Naive thymus-derived CD4-positive, alpha-beta T cell (primary cell): ENCODE measurements at regions of chr1 and their contacts with region 1.

Region 1: GRCh38 chr1:84944767-84945486 is 51.9 kb upstream of the LPAR3 start:
- DNase-seq: peak; percentile 20 to 94 (median 90)
- ATAC-seq: peak; percentile 98
- H3K4me3 ChIP-seq: peak overlapping the region; percentile 63
- H3K4me3 Mint-ChIP-seq: peak overlapping the region; percentile 72 to 93 (median 86)
- H3K27ac ChIP-seq: peak overlapping the region; percentile 89
- H3K27ac Mint-ChIP-seq: peak overlapping the region; percentile 87 to 98 (median 96)
- H3K4me1 ChIP-seq: peaks cover 5 to 9% of the 10 kb centered on the region in 2 donors
- H3K4me1 Mint-ChIP-seq: peaks cover 7 to 25% (median 12%) of the 10 kb centered on the region in 7 donors
- H3K27me3 ChIP-seq: no peaks in the 10 kb centered on the region
- H3K27me3 Mint-ChIP-seq: peaks cover 0 to 5% (median 0%) of the 10 kb centered on the region in 5 donors

Region 2: DNA sequence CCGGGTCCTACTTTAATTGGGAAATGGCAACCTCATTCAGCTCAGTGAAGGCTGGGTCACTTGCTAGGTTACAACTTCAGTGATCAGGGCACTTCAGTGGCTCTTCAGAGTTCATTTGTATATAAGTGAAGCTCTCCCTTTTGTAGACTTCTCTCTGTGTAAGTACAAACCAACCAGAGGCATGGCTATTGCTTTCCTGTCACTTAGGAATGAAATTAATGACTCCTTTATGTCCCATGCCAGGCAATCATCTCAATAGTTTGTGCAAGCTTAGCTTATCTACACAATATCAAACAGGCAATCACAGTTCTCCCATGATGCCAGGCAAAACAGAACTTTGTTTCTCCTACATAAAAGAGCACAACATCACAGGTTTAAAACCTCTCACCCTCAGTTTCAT is 347.9 kb before region 1 on chr1:
- CTCF ChIA-PET with region 1: no interaction called
- POLR2A ChIA-PET with region 1: no interaction called
- intact Hi-C with region 1: no loop called
- DNase-seq: no peak
- ATAC-seq: no peak
- H3K4me3 ChIP-seq: no peak overlapping the region
- H3K4me3 Mint-ChIP-seq: no peak overlapping the region
- H3K27ac ChIP-seq: no peak overlapping the region
- H3K27ac Mint-ChIP-seq: no peak overlapping the region
- H3K4me1 ChIP-seq: no peaks in the 10 kb centered on the region
- H3K4me1 Mint-ChIP-seq: peaks cover 0 to 11% (median 1%) of the 10 kb centered on the region in 7 donors
- H3K27me3 ChIP-seq: no peaks in the 10 kb centered on the region
- H3K27me3 Mint-ChIP-seq: peaks cover 0 to 7% (median 0%) of the 10 kb centered on the region in 5 donors

Region 3: GRCh38 chr1:84973498-84974334 is 28.8 kb after region 1 on chr1:
- CTCF ChIA-PET with region 1: interaction called, 3 read pairs
- POLR2A ChIA-PET with region 1: no interaction called
- intact Hi-C with region 1: loop called in 1 of 2 experiments (anchors 1 kb)
- DNase-seq: peak in 1 of 9 donors; percentile 49
- ATAC-seq: no peak
- H3K4me3 ChIP-seq: no peak overlapping the region
- H3K4me3 Mint-ChIP-seq: no peak overlapping the region
- H3K27ac ChIP-seq: no peak overlapping the region
- H3K27ac Mint-ChIP-seq: peak overlapping the region in 1 of 9 donors; percentile 72
- H3K4me1 ChIP-seq: peaks cover 0 to 23% of the 10 kb centered on the region in 2 donors
- H3K4me1 Mint-ChIP-seq: peaks cover 0 to 69% (median 0%) of the 10 kb centered on the region in 7 donors
- H3K27me3 ChIP-seq: no peaks in the 10 kb centered on the region
- H3K27me3 Mint-ChIP-seq: peaks cover 0 to 21% (median 0%) of the 10 kb centered on the region in 5 donors

Region 4: DNA sequence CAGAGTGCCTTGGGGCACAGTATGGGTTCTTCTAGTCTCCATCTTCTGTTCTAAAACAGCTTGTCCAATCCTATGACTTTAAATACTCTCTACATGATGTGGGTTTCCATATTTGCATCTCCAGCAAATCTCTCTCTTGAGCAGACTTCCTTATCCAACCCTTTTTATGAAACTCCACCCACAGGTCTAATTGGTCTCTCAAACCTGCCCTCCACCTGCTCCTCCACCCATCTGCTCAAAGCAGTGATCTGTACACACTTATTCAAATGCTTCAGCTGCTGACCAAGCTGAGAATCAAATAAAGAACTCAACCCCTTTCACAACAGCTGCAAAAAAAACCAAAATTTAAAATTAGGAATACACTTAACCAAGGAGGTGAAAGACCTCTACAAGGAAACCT is 40.4 kb after region 1 on chr1:
- CTCF ChIA-PET with region 1: no interaction called
- POLR2A ChIA-PET with region 1: no interaction called
- intact Hi-C with region 1: no loop called
- DNase-seq: no peak
- ATAC-seq: no peak
- H3K4me3 ChIP-seq: no peak overlapping the region
- H3K4me3 Mint-ChIP-seq: no peak overlapping the region
- H3K27ac ChIP-seq: no peak overlapping the region
- H3K27ac Mint-ChIP-seq: no peak overlapping the region
- H3K4me1 ChIP-seq: peaks cover 2 to 17% of the 10 kb centered on the region in 2 donors
- H3K4me1 Mint-ChIP-seq: peaks cover 6 to 29% (median 9%) of the 10 kb centered on the region in 7 donors
- H3K27me3 ChIP-seq: no peaks in the 10 kb centered on the region
- H3K27me3 Mint-ChIP-seq: peaks cover 0 to 13% (median 0%) of the 10 kb centered on the region in 5 donors

Region 5: DNA sequence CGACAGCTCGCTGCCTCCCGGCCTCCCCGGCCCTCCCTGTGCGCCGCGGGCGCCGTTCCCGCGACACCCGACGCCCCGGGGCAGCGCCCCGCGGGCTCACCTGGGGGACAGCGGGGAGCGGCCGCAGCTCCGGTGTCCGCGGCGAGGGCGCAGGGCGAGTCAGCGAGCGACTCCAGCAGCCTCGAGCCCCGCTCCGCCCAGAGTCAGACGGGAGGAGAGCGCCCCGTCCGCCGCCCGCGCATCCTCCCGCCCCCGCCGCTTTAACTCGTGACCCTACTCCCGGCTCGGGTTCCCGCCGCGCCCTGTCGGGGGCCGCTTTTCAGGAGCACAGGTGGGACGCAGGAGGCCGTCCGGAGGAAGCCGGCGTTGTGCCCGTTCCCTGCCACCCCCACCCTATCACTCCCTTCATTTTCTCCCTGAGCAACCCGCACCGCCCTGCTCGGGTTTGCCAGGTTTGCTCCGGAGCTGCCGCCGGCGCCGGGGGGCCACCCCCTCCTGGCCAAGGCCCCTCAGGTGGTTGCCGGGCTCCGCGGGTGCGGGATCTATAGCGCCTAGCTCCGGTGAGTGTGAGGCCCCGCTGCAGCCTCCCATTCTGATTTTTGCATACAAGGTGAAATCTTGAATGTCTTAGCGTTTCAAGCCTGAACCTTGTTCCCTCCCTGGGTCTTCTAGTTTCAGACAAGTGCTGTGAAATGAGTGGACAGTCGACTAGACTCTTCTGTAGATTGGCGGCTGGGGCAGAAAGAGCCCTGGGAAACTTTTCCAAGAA is 103.6 kb after region 1 on chr1 and contains the start of gene MCOLN3:
- CTCF ChIA-PET with region 1: interaction called, 3 read pairs
- POLR2A ChIA-PET with region 1: no interaction called
- intact Hi-C with region 1: loop called in 1 of 2 experiments (anchors 1 kb)
- DNase-seq: peak in 7 of 9 donors; percentile 9 to 56 (median 24)
- ATAC-seq: peak; percentile 67
- H3K4me3 ChIP-seq: peak within 1 kb of the TSS; percentile 38
- H3K4me3 Mint-ChIP-seq: peak within 1 kb of the TSS; percentile 70 to 86 (median 80)
- H3K27ac ChIP-seq: no peak within 1 kb of the TSS
- H3K27ac Mint-ChIP-seq: peak within 1 kb of the TSS in 1 of 9 donors; percentile 55
- H3K4me1 ChIP-seq: peaks cover 10 to 21% of the 10 kb centered on the region in 2 donors
- H3K4me1 Mint-ChIP-seq: peaks cover 7 to 35% (median 29%) of the 10 kb centered on the region in 7 donors
- H3K27me3 ChIP-seq: peaks cover 11 to 13% of the 10 kb centered on the region in 2 donors
- H3K27me3 Mint-ChIP-seq: peaks cover 47 to 60% (median 54%) of the 10 kb centered on the region in 5 donors
- total RNA-seq, gene MCOLN3: 0.77 to 11.1 (median 0.95) TPM

Region 6: DNA sequence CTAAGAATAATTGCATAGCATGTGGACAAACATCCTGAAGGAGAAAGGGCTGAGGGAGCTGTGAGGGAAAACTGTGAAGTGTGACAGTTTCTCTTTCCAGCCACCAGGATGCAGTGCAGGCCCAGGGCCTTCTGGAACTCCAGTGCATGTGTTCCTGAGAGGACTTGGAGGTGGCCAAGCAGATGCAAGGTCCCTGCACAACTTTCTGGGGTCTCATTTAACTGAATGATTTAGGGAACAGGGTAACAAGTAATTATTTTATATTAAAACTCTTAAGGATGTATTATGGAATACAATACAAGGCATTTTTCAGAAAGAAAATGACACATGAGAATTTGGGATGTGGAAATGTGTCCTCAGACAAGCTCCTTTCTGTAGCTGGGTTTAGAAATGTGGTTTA is 164.5 kb after region 1 on chr1:
- CTCF ChIA-PET with region 1: interaction called, 5 read pairs
- POLR2A ChIA-PET with region 1: no interaction called
- intact Hi-C with region 1: loop called (anchors 1 kb)
- DNase-seq: peak in 7 of 9 donors; percentile 27 to 57 (median 43)
- ATAC-seq: peak; percentile 69
- H3K4me3 ChIP-seq: no peak overlapping the region
- H3K4me3 Mint-ChIP-seq: no peak overlapping the region
- H3K27ac ChIP-seq: no peak overlapping the region
- H3K27ac Mint-ChIP-seq: peak overlapping the region in 1 of 9 donors; percentile 41
- H3K4me1 ChIP-seq: no peaks in the 10 kb centered on the region
- H3K4me1 Mint-ChIP-seq: no peaks in the 10 kb centered on the region
- H3K27me3 ChIP-seq: no peaks in the 10 kb centered on the region
- H3K27me3 Mint-ChIP-seq: peaks cover 0 to 31% (median 0%) of the 10 kb centered on the region in 5 donors

Region 7: DNA sequence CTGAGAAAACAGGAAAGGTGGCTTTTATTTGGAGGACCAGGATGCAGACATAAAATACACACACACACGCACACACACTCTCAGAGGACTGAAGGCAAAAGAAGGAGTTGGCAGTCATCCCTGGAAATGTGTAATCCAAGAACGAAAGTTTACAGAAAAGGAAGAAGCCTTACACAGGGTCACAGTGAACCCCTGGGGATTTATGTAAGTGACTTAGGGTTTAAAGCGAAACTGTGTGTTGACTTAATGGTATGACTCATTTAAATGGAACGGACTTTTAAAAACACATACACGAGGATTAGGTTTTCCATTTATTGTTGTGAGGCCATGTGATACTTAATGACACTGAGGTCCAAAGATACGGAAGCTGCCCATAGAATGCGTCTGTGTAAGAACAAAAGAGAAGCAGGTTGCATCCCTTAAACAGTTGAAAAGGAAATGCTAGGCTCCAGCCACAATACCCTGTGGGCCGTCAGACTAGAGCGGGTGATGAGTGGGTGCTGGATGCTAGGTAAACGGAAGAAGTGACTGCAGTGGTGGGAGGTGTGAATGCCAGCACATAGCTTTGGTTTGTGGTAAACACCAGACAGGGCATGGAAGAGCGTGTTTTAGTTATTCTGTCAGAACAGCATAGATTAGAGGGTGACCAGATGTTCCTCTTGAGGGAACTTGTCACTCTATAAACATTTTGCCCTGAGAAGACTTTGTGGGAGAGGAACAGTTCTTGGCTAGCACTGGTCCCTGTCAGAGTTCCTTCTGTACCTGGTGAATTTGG is 353.1 kb after region 1 on chr1:
- CTCF ChIA-PET with region 1: no interaction called
- POLR2A ChIA-PET with region 1: no interaction called
- intact Hi-C with region 1: no loop called
- DNase-seq: peak in 1 of 9 donors; percentile 76
- ATAC-seq: peak; percentile 89
- H3K4me3 ChIP-seq: no peak overlapping the region
- H3K4me3 Mint-ChIP-seq: peak overlapping the region in 3 of 10 donors; percentile 16 to 47 (median 28)
- H3K27ac ChIP-seq: no peak overlapping the region
- H3K27ac Mint-ChIP-seq: peak overlapping the region in 4 of 9 donors; percentile 1 to 61 (median 55)
- H3K4me1 ChIP-seq: peaks cover 0 to 19% of the 10 kb centered on the region in 2 donors
- H3K4me1 Mint-ChIP-seq: peaks cover 4 to 17% (median 9%) of the 10 kb centered on the region in 7 donors
- H3K27me3 ChIP-seq: no peaks in the 10 kb centered on the region
- H3K27me3 Mint-ChIP-seq: peaks cover 0 to 41% (median 0%) of the 10 kb centered on the region in 5 donors

Region 8: DNA sequence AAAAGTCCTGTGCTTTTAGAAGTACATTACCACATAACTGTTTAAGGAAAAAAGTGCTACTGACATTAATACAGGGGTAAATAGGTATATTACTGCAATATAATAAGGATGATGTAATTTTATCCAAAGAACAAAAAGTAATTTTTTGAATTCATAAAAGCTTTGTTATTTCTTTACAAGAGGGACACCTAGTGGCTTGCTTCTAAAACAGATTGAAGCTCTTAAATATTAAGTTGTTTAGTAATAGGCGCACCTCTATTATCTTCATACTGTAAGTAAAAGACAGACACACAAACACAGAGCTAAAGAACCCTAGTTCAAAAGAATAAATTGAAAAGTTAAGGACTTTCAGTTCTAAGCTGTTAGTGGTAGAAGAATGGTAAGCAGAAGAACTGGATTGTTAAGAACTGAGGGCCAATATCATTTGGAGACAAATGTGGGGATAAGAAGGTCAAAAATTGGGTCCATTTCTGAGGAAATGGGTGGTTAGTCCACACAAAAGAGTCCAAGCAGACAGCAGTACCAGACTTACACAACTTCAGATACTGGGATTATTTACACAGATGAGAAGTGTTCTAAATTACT is 747.9 kb after region 1 on chr1:
- CTCF ChIA-PET with region 1: interaction called, 3 read pairs
- POLR2A ChIA-PET with region 1: no interaction called
- intact Hi-C with region 1: loop called in 1 of 2 experiments (anchors 1 kb)
- DNase-seq: no peak
- ATAC-seq: no peak
- H3K4me3 ChIP-seq: no peak overlapping the region
- H3K4me3 Mint-ChIP-seq: no peak overlapping the region
- H3K27ac ChIP-seq: no peak overlapping the region
- H3K27ac Mint-ChIP-seq: peak overlapping the region in 1 of 9 donors; percentile 13
- H3K4me1 ChIP-seq: no peaks in the 10 kb centered on the region
- H3K4me1 Mint-ChIP-seq: peaks cover 4 to 40% (median 31%) of the 10 kb centered on the region in 7 donors
- H3K27me3 ChIP-seq: no peaks in the 10 kb centered on the region
- H3K27me3 Mint-ChIP-seq: no peaks in the 10 kb centered on the region